AG04450 (cell line): ENCODE measurements at regions of chr10 and their contacts with region 1.

Region 1: GRCh38 chr10:73886085-73886529 is 11.8 kb upstream of the CAMK2G start:
- DNase-seq: peak; percentile 65
- H3K4me3 ChIP-seq: no peak overlapping the region
- H3K27ac ChIP-seq: peak overlapping the region; percentile 39
- H3K27me3 ChIP-seq: no peaks in the 10 kb centered on the region
- CTCF ChIP-seq: peak; percentile 87

Region 2: GRCh38 chr10:73591935-73592699 is 294.0 kb before region 1 on chr10:
- CTCF ChIA-PET with region 1: no interaction called
- POLR2A ChIA-PET with region 1: no interaction called
- DNase-seq: no peak
- H3K4me3 ChIP-seq: no peak overlapping the region
- H3K27ac ChIP-seq: no peak overlapping the region
- H3K27me3 ChIP-seq: no peaks in the 10 kb centered on the region
- CTCF ChIP-seq: no peak

Region 3: DNA sequence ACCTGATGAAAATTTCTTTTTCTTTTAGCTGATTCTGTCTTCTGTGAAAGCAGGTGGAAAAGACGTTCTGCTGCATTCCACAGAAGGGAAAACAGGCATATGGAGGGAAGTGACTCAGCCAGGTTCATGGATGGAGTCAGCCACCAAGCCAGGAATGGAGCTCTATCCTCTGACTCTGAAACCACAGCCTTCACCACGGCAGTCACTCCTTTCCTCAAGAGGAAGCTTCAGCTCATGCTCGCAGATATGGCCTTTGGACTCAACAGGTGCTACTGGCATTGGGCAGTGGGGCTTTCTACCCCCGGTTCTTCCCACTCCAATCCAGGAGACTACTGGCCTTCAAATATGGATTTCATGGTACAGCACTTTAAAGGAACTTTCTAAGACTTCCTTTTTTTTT is 13.3 kb after region 1 on chr10:
- CTCF ChIA-PET with region 1: interaction called, 8 read pairs
- POLR2A ChIA-PET with region 1: interaction called, 16 read pairs
- DNase-seq: peak; percentile 81
- H3K4me3 ChIP-seq: no peak overlapping the region
- H3K27ac ChIP-seq: peak overlapping the region; percentile 80
- H3K27me3 ChIP-seq: no peaks in the 10 kb centered on the region
- CTCF ChIP-seq: no peak

Region 4: DNA sequence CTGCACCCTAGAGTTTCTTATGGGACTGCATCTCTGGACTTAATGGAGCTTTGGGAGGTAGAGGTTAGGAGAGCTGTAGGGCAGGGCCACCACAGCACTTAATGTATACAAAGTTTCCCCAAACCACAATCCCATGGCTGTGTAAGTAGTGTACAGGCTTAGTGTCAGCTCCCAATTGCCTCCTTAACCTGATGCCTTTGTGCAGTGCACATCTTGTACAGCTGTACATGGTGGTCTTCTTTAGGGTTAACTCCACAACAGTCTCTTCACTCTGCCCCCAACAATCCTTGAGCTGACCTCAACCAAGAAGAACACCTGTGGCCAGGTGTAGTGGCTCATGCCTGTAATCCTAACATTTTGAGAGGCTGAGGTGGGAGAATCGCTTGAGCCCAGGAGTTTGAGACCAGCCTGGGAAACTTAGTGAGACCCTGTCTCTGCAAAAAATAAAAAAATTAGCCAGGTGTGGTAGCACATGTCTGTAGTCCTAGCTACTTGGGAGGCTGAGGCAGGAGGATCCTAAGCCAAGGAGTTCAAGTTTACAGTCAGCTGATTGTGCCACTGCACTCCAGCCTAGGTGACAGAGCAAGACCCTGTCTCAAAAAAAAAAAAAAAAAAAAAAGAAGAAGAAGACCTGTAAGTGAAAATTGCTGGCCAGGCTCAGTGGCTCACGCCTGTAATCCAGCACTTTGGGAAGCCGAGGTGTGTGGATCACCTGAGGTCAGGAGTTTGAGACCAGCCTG is 31.6 kb after region 1 on chr10:
- CTCF ChIA-PET with region 1: no interaction called
- POLR2A ChIA-PET with region 1: interaction called, 10 read pairs
- DNase-seq: no peak
- H3K4me3 ChIP-seq: no peak overlapping the region
- H3K27ac ChIP-seq: no peak overlapping the region
- H3K27me3 ChIP-seq: no peaks in the 10 kb centered on the region
- CTCF ChIP-seq: no peak

Region 5: DNA sequence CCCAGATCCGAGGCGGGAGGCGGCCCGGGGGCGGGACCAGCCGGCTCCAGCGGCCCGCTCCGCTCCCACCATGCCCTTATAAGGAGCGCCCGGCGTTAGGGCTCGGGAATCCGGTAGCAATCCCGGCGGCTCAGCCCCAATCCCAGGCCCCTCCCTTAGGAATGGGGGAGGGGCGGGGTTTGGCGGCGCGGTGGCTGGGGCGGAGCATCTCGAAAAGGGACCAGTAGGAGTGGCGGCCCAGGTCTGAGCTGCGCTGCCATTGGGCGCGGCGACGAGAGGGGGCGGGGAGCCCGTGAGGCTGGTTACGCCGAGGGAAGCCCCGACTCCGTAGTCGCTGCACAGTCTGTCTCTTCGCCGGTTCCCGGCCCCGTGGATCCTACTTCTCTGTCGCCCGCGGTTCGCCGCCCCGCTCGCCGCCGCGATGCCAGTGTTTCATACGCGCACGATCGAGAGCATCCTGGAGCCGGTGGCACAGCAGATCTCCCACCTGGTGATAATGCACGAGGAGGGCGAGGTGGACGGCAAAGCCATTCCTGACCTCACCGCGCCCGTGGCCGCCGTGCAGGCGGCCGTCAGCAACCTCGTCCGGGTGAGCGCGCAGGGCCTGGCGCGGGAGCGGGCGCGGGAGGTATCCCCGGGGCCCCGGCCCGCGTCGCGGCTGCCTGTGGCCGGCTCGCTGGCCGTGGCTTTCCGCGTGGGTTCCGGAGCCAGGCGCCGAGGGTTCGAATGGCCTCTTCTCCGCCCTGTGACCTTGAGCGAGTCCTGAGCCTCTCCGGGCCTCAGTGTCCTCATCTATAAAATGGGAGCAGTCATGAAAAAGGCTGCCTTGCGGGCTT is 111.9 kb after region 1 on chr10 and contains the start of gene VCL:
- CTCF ChIA-PET with region 1: interaction called, 32 read pairs
- POLR2A ChIA-PET with region 1: interaction called, 9 read pairs
- DNase-seq: peak; percentile 96
- H3K4me3 ChIP-seq: peak within 1 kb of the TSS; percentile 94
- H3K27ac ChIP-seq: peak within 1 kb of the TSS; percentile 90
- H3K27me3 ChIP-seq: no peaks in the 10 kb centered on the region
- CTCF ChIP-seq: no peak
- polyA plus RNA-seq, gene VCL: 313 and 327 TPM in 2 replicates

Region 6: DNA sequence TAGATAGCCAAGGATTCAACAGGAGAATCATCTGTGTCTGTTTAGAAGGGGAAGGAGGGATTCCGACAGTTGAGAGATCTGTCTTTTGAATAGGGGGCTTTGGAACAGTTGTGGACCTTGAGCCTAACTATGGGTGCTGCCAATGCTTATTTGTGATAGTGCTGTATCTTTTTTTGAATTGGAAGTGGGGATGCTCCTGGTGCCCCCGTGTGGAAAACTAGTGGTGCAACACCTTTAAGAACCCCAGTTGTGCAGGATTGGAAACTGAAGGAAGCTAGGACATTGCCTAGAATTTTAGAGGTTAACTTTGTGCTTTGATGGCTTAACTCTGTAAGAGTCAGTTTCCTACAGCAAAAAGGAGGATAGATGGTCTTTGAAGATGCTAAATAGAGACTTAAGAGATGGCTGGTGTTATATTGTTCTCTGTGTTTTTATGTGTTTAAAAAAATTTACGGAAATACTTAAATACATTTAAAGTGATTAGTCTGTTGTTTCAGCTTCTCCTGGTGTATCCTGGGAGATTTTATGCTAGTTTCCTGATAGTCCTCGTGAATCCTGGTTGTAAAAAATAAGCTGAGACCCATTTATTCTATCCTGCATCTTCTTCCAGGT is 195.2 kb after region 1 on chr10:
- CTCF ChIA-PET with region 1: interaction called, 62 read pairs
- POLR2A ChIA-PET with region 1: no interaction called
- DNase-seq: no peak
- H3K4me3 ChIP-seq: no peak overlapping the region
- H3K27ac ChIP-seq: no peak overlapping the region
- H3K27me3 ChIP-seq: no peaks in the 10 kb centered on the region
- CTCF ChIP-seq: peak; percentile 88

Region 7: GRCh38 chr10:74234569-74234968 is 348.5 kb after region 1 on chr10:
- CTCF ChIA-PET with region 1: interaction called, 11 read pairs
- POLR2A ChIA-PET with region 1: no interaction called
- DNase-seq: no peak
- H3K4me3 ChIP-seq: no peak overlapping the region
- H3K27ac ChIP-seq: no peak overlapping the region
- H3K27me3 ChIP-seq: no peaks in the 10 kb centered on the region
- CTCF ChIP-seq: peak; percentile 51